Naive thymus-derived CD8-positive, alpha-beta T cell (primary cell): ENCODE measurements at regions of chr6 and their contacts with region 1.

Region 1: DNA sequence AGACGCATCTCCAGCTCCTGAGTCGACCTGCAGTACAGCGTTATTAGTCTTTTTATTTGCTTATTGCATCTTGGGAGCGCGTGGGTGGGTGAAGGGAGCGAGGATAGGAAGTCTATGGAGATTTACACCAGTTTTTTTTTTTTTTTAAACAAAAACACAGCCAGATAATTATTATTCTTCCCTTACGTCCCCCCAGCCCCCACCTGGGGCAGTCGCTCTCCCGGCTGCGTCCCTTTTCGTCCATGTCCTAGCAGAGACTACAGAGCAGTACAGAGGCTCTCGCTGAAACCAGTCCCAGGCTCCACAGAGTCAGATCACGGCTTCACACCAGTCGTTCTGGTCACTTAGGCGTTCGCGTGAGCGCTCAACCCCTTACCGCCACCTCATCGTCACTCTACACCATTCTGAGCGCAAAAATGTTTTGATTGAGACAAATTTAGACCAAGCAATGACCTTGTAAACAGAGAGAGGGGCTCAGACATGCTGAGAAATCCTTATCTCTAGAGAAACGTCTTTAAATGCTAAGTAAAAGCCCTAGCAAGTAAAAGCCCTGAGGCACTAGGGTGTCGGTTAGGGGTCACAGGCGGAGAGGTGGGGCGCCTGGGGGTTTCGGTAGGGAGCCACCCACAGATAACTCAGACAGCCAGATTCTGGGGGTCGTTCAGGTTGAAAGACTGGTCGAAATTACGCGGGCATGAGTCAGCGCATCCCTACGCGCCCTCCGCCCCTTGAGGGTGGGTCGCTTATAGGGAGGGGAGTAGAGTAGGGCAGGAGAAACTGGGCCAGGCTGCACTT is 975 bp upstream of the PPT2 start:
- DNase-seq: peak in 3 of 10 donors; percentile 5 to 62 (median 8)
- ATAC-seq: no peak
- H3K4me3 Mint-ChIP-seq: peak overlapping the region; percentile 64 to 100 (median 86)
- H3K27ac Mint-ChIP-seq: peak overlapping the region; percentile 80 to 99 (median 92)
- H3K4me1 Mint-ChIP-seq: peaks cover 50 to 82% (median 61%) of the 10 kb centered on the region in 4 donors
- H3K27me3 Mint-ChIP-seq: peaks cover 0 to 23% (median 4%) of the 10 kb centered on the region in 5 donors

Region 2: GRCh38 chr6:32127717-32128592 is 25.0 kb before region 1 on chr6 and contains the start of gene ATF6B:
- POLR2A ChIA-PET with region 1: interaction called, 21 read pairs
- DNase-seq: peak; percentile 86 to 99 (median 97)
- ATAC-seq: peak; percentile 95 to 96
- H3K4me3 Mint-ChIP-seq: peak within 1 kb of the TSS; percentile 96 to 100 (median 98)
- H3K27ac Mint-ChIP-seq: peak within 1 kb of the TSS; percentile 90 to 99 (median 97)
- H3K4me1 Mint-ChIP-seq: peaks cover 26 to 62% (median 57%) of the 10 kb centered on the region in 4 donors
- H3K27me3 Mint-ChIP-seq: no peaks in the 10 kb centered on the region
- polyA plus RNA-seq, gene ATF6B: 17.5 to 25.7 (median 21.4) TPM

Region 3: DNA sequence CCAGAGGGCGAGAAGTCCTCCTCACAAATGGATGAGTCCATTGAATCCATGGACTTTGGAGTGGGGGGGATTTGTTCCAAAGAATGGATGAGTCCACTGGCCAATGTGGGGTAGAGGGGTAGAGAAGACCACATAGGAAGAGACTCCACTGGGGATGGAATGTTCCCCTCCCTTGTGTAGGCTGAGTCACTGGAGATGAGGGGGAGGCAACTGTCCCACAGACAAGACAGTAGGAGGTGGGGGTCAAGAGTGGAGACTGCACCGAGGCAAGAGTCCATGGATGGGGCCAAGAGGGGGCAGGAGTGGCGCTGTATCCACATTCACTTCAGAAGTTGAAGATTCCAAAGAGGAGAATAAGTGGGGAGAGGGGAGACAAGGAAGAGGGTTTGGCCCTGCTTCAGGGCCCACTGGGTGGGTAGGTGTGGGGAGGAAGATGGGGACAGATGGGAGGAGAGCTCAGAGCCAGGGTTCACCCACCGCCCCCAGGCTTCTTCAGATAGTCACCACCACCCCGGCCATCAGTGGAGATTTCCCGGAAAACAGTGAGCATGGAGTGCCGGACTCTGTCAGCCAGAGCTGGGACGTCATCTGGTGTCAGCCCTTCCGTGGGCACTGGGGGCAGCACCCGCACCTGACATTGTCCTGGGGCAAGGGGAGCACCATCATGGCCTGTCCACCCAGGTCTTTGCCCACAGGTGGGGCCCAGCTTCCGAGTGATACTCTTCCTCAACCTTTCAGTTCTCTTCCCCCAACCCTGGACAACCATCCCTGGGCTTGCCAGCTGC is 16.0 kb after region 1 on chr6:
- POLR2A ChIA-PET with region 1: no interaction called
- DNase-seq: peak in 1 of 10 donors; percentile 45
- ATAC-seq: no peak
- H3K4me3 Mint-ChIP-seq: no peak overlapping the region
- H3K27ac Mint-ChIP-seq: peak overlapping the region in 3 of 10 donors; percentile 36 to 55 (median 44)
- H3K4me1 Mint-ChIP-seq: peaks cover 18 to 54% (median 30%) of the 10 kb centered on the region in 4 donors
- H3K27me3 Mint-ChIP-seq: no peaks in the 10 kb centered on the region

Region 4: DNA sequence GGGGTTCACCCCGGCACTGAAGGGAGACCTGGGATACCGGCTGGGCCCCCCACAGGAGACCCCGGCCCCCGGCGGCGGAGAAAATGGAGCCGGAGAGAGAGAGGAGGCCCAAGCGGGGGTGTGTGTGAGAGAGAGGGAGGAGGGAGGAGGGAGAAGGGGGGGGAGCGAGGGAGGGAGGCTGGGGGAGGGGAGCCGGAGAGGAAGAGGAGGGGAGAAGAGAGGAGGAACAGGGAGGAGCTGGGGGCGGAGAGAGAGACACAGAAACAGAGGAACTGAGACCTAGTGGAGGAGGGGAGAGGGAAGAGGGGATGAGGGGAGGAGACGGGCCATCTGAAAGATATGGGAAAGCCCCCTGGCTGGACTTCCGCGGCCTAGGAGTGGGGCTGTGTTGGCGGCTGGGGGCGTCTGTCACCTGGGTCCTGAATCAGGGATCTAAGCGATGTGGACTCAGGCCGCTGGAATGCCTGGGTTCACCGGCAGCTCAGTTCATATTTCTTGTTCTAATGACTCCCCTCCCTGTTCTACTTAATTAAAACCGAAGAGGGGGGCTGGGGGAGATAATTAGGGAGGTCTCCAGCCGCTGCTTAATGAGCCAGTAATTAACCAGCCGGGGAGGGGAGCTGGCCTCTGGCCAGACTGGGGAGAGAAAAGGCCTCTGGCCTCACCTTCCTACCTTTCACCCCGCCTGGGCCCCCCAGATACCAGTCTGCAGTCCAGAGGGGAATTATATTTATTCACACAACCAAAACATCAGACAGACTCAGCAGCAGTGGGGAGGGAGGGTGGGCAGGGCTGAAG is 37.3 kb after region 1 on chr6 and contains the start of gene PBX2:
- POLR2A ChIA-PET with region 1: interaction called, 10 read pairs
- DNase-seq: peak; percentile 52 to 92 (median 68)
- ATAC-seq: peak; percentile 40 to 58
- H3K4me3 Mint-ChIP-seq: peak within 1 kb of the TSS; percentile 94 to 100 (median 98)
- H3K27ac Mint-ChIP-seq: peak within 1 kb of the TSS; percentile 91 to 100 (median 98)
- H3K4me1 Mint-ChIP-seq: peaks cover 49 to 79% (median 65%) of the 10 kb centered on the region in 4 donors
- H3K27me3 Mint-ChIP-seq: no peaks in the 10 kb centered on the region
- polyA plus RNA-seq, gene PBX2: 1.6 to 2.2 (median 2.0) TPM

Region 5: DNA sequence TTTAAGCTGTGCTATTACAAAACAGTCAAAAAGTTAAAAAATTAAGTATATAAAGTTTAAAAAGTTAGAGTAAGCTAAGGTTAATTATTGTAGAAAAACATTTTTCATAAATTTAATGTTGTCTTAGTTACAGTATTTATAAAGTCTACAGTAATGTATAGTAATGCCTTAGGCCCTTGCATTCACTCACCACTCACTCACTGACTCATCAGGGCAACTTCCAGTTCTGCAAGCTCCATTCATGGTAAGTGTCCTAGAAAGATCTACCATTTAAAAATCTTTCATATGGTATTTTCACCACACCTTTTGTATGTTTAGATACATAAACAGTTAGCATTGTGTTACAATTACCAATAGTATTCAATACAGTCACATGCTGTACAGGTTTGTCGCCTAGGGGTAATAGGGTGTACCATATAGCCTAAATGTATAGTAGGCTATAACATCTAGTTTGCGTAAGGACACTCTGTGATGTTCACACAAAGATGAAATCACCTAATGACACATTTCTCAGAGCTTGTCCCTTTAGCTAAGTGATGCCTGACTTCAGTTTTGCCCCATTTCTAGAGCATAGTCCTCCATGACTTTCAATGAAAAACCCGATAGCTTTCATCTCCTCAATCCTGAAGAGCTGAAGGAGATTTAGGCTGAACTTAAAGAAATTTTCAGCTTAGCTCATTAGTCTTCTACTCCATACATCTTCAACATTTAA is 271.8 kb after region 1 on chr6:
- POLR2A ChIA-PET with region 1: no interaction called
- DNase-seq: no peak
- ATAC-seq: no peak
- H3K4me3 Mint-ChIP-seq: no peak overlapping the region
- H3K27ac Mint-ChIP-seq: no peak overlapping the region
- H3K4me1 Mint-ChIP-seq: no peaks in the 10 kb centered on the region
- H3K27me3 Mint-ChIP-seq: peaks cover 4 to 18% (median 10%) of the 10 kb centered on the region in 5 donors